ENCODE measurements at regions of chr5 and their contacts with region 1.

Region 1: GRCh38 chr5:95961617-95962474 is at the start of gene ELL2:
- DNase-seq: peak; percentile 99 to 100 (median 100)
- H3K4me3 ChIP-seq: peak within 1 kb of the TSS; percentile 44 to 95 (median 75)
- H3K4me3 Mint-ChIP-seq: peak within 1 kb of the TSS; percentile 99
- H3K27ac ChIP-seq: peak within 1 kb of the TSS; percentile 85 to 92
- H3K27ac Mint-ChIP-seq: peak within 1 kb of the TSS; percentile 94 to 99 (median 98)
- H3K4me1 ChIP-seq: peaks cover 34 to 36% of the 10 kb centered on the region in 2 donors
- H3K4me1 Mint-ChIP-seq: peaks cover 43% of the 10 kb centered on the region
- H3K27me3 ChIP-seq: no peaks in the 10 kb centered on the region
- H3K27me3 Mint-ChIP-seq: peaks cover 5 to 28% (median 15%) of the 10 kb centered on the region in 3 donors
- CTCF ChIP-seq: no peak
- polyA plus RNA-seq, gene ELL2: 3.1 to 8.1 (median 5.8) TPM

Region 2: DNA sequence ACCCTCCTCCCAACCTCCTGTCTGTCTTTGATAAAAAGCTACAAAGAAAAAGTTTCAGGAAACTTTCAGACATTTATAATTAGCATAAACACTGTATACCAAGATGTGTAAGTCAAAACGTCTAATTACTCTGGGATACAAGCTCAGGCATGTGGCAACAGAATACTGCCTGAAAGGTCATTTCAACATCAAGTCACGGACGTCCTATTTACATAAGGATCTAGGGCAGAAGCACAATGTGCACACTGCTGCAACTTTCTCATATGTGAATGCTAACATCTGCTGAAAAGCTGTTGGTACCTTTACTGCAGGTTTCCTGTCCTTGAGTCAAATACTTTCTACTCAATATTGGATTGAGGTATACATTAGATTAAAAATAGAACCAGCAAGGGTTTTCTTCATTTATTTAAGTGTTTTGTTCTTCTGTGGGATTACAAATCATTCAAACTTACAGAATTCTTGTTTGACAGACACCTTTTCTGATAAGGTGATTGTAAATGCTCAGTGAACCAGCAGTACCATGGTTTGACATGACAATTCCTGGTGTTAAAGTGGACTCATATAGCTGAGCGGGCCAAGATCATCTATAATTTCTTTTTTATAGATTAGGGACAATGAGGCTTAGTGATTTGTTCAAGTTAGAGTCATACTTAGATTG is 37.0 kb before region 1 on chr5:
- intact Hi-C with region 1: loop called in 1 of 2 experiments (anchors 5 kb)
- DNase-seq: peak; percentile 58 to 84 (median 73)
- H3K4me3 ChIP-seq: peak overlapping the region in 1 of 3 experiments; percentile 48
- H3K4me3 Mint-ChIP-seq: peak overlapping the region in 1 of 2 donors; percentile 67
- H3K27ac ChIP-seq: peak overlapping the region in 1 of 2 donors; percentile 60
- H3K27ac Mint-ChIP-seq: peak overlapping the region; percentile 33 to 90 (median 84)
- H3K4me1 ChIP-seq: peaks cover 41 to 42% of the 10 kb centered on the region in 2 donors
- H3K4me1 Mint-ChIP-seq: peaks cover 53% of the 10 kb centered on the region
- H3K27me3 ChIP-seq: no peaks in the 10 kb centered on the region
- H3K27me3 Mint-ChIP-seq: peaks cover 0 to 3% (median 0%) of the 10 kb centered on the region in 3 donors
- CTCF ChIP-seq: no peak

Region 3: GRCh38 chr5:96146675-96147074 is 184.8 kb after region 1 on chr5:
- intact Hi-C with region 1: loop called in 1 of 2 experiments (anchors 5 kb)
- DNase-seq: peak; percentile 82 to 94 (median 88)
- H3K4me3 ChIP-seq: no peak overlapping the region
- H3K4me3 Mint-ChIP-seq: no peak overlapping the region
- H3K27ac ChIP-seq: peak overlapping the region in 1 of 2 donors; percentile 20
- H3K27ac Mint-ChIP-seq: peak overlapping the region; percentile 11 to 79 (median 56)
- H3K4me1 ChIP-seq: peaks cover 20 to 24% of the 10 kb centered on the region in 2 donors
- H3K4me1 Mint-ChIP-seq: peaks cover 28% of the 10 kb centered on the region
- H3K27me3 ChIP-seq: no peaks in the 10 kb centered on the region
- H3K27me3 Mint-ChIP-seq: peaks cover 0 to 3% (median 0%) of the 10 kb centered on the region in 3 donors
- CTCF ChIP-seq: no peak

Region 4: DNA sequence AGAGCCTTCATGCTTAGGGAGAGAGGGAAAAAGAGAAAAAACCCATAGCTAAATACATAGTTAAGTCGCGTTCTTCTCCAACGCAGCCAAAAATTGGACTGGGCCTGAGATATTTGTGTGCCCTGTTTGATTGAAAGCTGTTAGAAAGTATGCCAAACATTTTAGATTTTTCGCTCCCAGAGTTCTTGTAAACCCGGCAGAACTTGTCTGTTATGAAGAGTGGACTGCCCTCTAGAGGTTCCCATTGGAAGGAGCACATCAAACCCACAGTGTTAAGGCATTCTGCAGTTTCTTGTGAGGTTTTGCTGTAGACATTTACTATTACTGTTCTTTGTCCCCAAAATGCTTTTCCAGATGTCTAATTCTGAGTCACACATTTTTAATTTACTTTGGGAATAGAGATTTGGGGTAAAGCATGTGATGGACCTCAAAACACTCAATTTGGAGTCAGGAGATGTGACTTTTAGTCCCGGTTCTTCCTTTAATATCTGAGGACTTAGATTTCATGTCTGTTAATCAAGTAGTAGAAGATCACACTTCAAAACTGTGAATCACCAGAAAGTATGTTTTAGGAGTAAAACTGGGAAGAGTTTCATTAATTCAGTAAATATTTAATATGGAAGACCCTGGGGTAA is 374.6 kb after region 1 on chr5:
- intact Hi-C with region 1: loop called in 1 of 2 experiments (anchors 10 kb)
- DNase-seq: peak; percentile 60 to 78 (median 75)
- H3K4me3 ChIP-seq: no peak overlapping the region
- H3K4me3 Mint-ChIP-seq: peak overlapping the region in 1 of 2 donors; percentile 36
- H3K27ac ChIP-seq: peak overlapping the region in 1 of 2 donors; percentile 58
- H3K27ac Mint-ChIP-seq: no peak overlapping the region
- H3K4me1 ChIP-seq: peaks cover 31 to 42% of the 10 kb centered on the region in 2 donors
- H3K4me1 Mint-ChIP-seq: peaks cover 36% of the 10 kb centered on the region
- H3K27me3 ChIP-seq: no peaks in the 10 kb centered on the region
- H3K27me3 Mint-ChIP-seq: peaks cover 0 to 1% (median 0%) of the 10 kb centered on the region in 3 donors
- CTCF ChIP-seq: peak; percentile 92